ENCODE measurements at regions of chr3 and their contacts with region 1.

Region 1: DNA sequence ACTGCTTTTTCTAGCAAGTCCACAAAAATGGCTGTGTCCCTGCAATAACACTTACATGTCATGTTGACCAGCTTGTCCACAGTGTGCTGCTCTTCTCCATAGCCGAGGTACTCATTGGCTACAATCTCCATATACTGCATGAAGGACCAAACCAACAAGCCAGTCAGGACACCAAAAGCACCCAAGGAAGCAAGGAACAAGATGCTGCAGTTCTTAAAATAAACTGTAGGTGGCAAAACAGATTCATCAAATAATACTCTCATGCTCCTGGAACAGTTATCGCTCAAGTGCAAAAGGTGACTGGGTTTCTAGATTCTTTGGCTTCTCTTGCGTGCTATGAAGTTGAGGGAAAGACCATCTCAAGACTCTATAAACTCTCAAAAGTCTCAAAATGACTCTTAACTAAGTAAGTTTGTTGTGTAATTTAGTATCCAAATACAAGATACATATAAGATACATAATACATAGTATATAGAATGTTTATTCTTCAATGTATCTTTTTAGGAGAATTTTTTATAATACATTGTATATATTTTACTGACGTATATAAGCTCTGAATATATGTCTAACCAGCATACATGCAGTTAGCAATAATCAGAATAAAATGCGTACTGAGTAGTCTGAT is 57.0 kb downstream of the NEK10 start:
- DNase-seq: no peak

Region 2: DNA sequence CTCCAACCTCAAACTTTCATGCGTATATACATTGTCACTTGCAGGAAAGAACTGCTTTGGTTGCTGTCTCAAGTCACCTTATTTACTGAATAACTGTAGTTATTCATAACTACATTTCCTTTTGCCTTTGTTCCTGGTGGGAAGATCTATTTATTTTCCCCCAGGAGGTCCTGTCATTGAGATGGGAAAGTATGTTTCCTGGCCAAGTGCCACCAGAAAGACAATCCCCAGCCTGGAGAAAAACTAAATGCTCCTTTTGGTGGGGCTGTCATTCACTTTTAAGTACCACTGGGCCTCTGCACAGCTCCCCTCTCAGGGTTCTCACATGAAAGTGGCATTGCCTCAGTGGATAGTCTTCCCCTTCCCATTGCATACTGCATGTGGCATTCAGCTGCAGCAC is 629.8 kb before region 1 on chr3:
- intact Hi-C with region 1: no loop called
- DNase-seq: no peak

Region 3: GRCh38 chr3:27431116-27431515 is 119.0 kb after region 1 on chr3:
- intact Hi-C with region 1: no loop called
- DNase-seq: no peak

Region 4: GRCh38 chr3:27467545-27467944 is 155.4 kb after region 1 on chr3:
- intact Hi-C with region 1: loop called (anchors 5 kb)
- DNase-seq: no peak

Region 5: DNA sequence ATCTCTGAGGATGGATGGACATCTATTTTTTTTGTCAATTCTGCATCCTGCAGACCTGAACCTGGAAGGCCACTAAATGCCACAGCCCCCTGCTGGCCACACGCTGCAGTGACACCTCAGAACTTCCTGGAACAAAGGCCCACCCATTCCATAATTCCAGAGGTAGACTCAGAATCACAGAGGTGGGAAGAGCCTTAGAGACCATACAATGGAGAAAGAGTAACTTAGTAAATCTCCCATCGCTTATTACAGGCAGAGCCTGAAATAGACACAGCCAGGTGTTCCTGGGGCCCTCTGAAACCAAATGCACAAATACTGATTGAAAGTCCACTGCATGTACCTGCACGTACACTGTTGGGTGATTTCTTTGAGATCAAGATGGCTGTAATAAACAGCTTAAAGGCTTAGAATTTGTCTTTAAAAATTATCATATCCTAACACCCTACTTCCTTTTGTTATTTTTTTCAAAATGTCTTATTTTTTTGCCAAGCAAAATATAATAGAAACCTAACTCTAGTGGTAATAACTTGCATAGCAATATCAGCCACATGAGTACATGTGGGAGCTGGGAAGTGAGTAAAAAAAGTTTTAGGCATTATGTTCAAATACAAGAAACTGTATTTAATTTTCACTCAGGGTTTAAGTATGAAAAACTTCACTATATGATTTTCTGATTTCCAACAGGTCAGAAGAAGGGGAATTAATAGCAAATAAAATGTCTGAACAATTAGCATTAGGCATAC is 347.3 kb after region 1 on chr3:
- intact Hi-C with region 1: loop called (anchors 5 kb)
- DNase-seq: no peak

Region 6: DNA sequence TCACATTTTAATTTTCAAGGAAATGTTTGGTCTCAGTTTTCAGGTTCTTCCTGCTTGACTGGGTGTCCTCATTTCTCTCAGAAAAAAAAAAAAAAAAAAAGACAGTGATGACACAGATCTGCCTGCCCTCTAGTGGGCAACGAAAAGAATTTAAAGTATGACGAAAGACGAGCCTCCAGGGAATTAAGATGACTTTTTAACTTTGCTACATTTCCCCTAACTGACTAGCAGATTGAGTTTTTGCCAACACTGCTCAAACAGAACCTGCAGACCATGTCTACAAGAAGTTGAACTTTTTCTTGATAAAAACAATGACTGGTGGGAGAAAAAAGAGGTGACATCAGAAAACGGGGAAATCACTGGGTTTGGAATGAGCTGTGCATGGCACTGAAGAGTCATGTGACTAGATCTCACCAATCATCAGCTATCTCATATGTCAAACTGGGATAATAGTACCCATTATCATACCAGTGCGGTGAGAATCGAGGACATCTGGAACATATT is 369.1 kb after region 1 on chr3:
- intact Hi-C with region 1: loop called (anchors 2 kb)
- DNase-seq: no peak

Measured in cardiac septum (tissue), 1 donor.